PC-9 (cell line): ENCODE measurements at regions of chr15 and their contacts with region 1.

Region 1: DNA sequence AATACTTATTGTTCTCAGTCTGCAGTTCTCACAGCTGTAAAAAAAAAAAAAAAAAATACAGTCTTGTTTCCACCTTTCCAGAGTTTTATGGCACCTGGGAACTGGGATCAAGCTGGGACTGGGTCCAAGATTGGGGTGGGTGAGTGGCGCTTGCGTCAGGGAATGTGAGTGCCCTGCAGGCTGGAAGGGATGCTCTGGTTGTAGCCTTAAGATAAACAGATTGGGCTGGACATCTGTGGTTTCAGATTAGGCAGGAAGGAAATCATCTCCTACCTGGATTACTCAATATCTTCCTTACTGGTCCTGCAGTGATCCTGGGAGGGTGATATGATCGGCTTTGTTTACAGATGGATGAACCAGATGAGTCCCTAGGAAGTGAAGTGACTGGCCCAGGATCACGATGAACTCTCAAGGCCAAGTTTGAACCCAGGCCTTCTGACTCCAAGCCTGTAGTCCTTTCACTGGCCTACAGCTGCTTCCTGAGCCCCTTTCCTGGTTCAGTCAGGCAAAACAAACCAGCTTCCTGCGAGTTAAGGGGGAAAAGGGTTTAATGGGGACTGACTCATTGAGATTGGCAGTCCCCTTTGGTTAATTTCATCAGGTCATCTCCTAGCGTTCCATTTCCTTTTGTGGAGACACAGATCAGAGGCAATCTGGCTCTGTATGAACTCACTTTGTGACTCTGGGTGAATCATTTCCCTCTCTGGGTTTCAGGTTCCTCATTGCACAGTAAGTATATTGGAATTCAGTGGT is 179.8 kb downstream of the THSD4 start:
- DNase-seq: peak; percentile 78 to 99
- H3K4me3 ChIP-seq: 0 out of 2 replicates have a peak overlapping the region, but pooled peaks have one; percentile 21
- H3K27ac ChIP-seq: peak overlapping the region; percentile 100
- H3K4me1 ChIP-seq: peaks cover 70% of the 10 kb centered on the region
- H3K27me3 ChIP-seq: no peaks in the 10 kb centered on the region
- CTCF ChIP-seq: no peak

Region 2: GRCh38 chr15:69881766-69882165 is 1413.3 kb before region 1 on chr15:
- CTCF ChIA-PET with region 1: no interaction called
- POLR2A ChIA-PET with region 1: no interaction called
- intact Hi-C with region 1: no loop called
- DNase-seq: no peak
- H3K4me3 ChIP-seq: no peak overlapping the region
- H3K27ac ChIP-seq: no peak overlapping the region
- H3K4me1 ChIP-seq: 0 out of 2 replicates have a peak, but pooled peaks cover 8% of the 10 kb centered on the region
- H3K27me3 ChIP-seq: no peaks in the 10 kb centered on the region
- CTCF ChIP-seq: no peak

Region 3: DNA sequence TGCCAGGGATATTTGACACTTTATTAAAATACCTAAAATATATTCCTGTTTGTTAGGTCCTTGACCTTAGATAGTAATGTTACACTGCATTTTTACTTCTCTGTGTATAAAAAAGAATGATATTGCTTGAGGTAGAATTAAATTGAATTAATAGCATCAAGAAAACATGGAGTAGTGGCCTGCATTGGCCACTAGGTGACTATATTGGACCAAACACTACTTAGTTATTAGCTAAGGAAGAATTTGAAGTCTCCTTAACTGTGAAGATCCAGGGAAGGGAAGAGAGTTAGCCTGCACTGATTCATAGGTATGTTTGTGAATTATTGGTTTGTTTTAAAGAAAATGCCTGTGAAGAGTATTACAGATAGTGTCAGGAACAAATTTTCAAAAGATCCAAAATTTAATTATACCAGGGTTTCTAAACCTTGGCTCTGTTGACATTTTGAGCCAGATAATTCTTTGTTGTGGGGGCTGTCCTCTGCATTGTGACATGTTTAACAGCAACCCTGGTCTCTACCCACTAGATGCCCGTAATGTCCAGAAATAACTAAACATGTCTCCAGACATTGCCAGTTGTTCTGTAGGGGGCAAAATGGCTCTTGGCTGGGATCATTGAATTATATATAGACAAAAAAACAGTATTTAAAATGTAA is 283.4 kb before region 1 on chr15:
- CTCF ChIA-PET with region 1: interaction called, 7 read pairs
- POLR2A ChIA-PET with region 1: no interaction called
- intact Hi-C with region 1: loop called (anchors 2 kb)
- DNase-seq: peak in 1 of 2 experiments; percentile 21
- H3K4me3 ChIP-seq: no peak overlapping the region
- H3K27ac ChIP-seq: no peak overlapping the region
- H3K4me1 ChIP-seq: no peaks in the 10 kb centered on the region
- H3K27me3 ChIP-seq: no peaks in the 10 kb centered on the region
- CTCF ChIP-seq: peak; percentile 83

Region 4: GRCh38 chr15:71114896-71115554 is 180.0 kb before region 1 on chr15 and contains the start of gene THSD4:
- CTCF ChIA-PET with region 1: interaction called, 3 read pairs
- POLR2A ChIA-PET with region 1: interaction called, 11 read pairs
- intact Hi-C with region 1: loop called (anchors 1 kb)
- DNase-seq: peak; percentile 76 to 82
- H3K4me3 ChIP-seq: peak within 1 kb of the TSS; percentile 84
- H3K27ac ChIP-seq: peak within 1 kb of the TSS; percentile 91
- H3K4me1 ChIP-seq: peaks cover 45% of the 10 kb centered on the region
- H3K27me3 ChIP-seq: no peaks in the 10 kb centered on the region
- CTCF ChIP-seq: peak; percentile 98
- total RNA-seq, gene THSD4: 29.3 and 33.1 TPM in 2 replicates

Region 5: DNA sequence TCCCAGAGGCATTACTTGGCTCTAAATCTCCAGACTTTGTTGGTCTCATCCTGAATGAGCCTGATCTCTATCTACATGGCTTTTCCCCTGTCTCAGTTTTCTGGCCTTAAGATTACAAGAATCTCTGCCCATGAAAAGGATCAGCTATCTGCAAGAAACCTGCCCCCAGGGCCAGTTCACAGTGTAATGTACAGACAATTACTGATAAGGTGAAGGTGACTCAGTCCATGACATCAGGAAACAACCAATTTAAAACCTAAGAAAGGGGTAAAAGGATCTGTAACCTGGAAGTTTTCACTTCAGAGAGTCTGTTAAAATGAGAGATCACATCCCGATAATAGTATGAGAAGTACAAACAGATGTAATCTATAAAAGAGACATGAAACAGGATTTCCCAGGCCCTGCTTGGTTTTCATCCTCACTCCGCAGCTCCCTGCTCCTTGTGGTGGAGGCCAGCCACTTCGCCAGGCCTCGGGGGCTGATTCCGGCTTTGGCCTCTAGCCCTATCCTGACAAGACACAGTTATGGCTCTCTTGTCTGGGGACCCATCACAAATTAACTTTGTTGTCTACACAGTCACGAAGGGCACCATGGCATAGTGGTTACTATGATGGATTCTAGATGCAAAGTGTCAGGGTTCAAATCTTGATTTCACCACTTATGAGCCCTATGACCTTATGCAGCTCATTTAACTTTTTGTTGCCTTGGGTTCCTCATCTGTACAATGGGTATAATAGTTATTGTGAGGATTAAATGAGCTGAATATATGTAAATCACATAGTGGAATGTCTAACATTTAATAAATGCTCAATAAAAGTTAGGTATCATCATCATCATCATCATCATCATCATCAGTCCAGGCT is 42.8 kb before region 1 on chr15:
- CTCF ChIA-PET with region 1: no interaction called
- POLR2A ChIA-PET with region 1: interaction called, 12 read pairs
- intact Hi-C with region 1: loop called (anchors 1 kb)
- DNase-seq: peak; percentile 82 to 96
- H3K4me3 ChIP-seq: no peak overlapping the region; the same call in 1 of the 2 replicates
- H3K27ac ChIP-seq: peak overlapping the region; percentile 90
- H3K4me1 ChIP-seq: peaks cover 37% of the 10 kb centered on the region
- H3K27me3 ChIP-seq: no peaks in the 10 kb centered on the region
- CTCF ChIP-seq: no peak

Region 6: DNA sequence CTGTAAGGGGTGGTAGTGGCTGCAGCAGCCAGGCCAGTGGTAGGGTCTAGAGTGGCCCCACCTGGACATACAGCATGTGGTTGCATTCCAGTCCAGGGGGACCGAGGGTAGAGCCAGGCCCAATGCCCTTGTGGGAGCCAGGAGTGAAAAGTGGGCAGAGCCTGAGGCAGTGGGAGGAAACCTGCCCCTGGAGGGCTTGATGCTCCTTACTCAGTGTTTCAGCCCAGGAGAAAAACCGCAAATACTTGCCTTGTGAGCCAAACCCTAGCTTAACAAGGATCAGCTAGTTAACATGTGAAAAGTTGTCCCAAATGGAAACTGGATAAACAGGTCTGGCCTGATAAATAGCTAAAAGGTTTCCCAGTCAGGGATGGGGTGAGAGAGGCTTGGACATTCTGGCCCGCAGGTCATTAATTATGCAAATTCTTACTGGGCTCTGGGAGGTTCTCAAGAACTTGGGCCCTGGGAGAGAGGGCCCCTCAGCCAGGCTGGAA is 42.2 kb after region 1 on chr15:
- CTCF ChIA-PET with region 1: no interaction called
- POLR2A ChIA-PET with region 1: no interaction called
- intact Hi-C with region 1: loop called (anchors 1 kb)
- DNase-seq: peak; percentile 80 to 97
- H3K4me3 ChIP-seq: peak overlapping the region; percentile 42; the same call in 1 of the 2 replicates
- H3K27ac ChIP-seq: peak overlapping the region; percentile 97
- H3K4me1 ChIP-seq: peaks cover 60% of the 10 kb centered on the region
- H3K27me3 ChIP-seq: no peaks in the 10 kb centered on the region
- CTCF ChIP-seq: no peak

Region 7: DNA sequence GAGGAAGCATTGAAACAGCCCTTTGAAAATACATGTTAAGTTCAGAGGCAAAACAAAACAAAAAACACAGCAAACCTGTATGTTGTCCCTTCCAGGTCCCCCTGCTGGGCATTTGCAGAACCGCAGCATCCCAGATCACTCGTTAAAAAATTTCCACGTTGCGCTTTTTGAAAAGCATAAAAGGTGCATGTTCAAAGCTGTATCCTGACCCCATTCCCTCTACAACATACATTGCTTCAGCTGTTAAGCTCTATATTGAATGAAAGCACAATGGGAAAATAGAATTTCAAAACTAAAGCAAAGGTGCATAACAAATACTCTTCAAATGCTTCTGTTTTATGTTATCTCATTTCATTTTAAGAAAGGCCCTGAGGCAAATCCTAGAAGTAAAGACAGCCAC is 148.5 kb after region 1 on chr15:
- CTCF ChIA-PET with region 1: interaction called, 13 read pairs
- POLR2A ChIA-PET with region 1: no interaction called
- intact Hi-C with region 1: loop called (anchors 1 kb)
- DNase-seq: peak in 1 of 2 experiments; percentile 45
- H3K4me3 ChIP-seq: no peak overlapping the region
- H3K27ac ChIP-seq: no peak overlapping the region
- H3K4me1 ChIP-seq: peaks cover 63% of the 10 kb centered on the region
- H3K27me3 ChIP-seq: no peaks in the 10 kb centered on the region
- CTCF ChIP-seq: peak; percentile 80